ENCODE measurements at regions of chr10 and their contacts with region 1.

Region 1: GRCh38 chr10:28663576-28664313 is 13.6 kb upstream of the BAMBI start:
- DNase-seq: peak; percentile 66
- ATAC-seq: peak; percentile 98
- H3K4me3 ChIP-seq: no peak overlapping the region
- H3K27ac ChIP-seq: no peak overlapping the region
- H3K4me1 ChIP-seq: peaks cover 2 to 20% of the 10 kb centered on the region in 2 experiments; a peak in 3 of 4 replicates
- H3K27me3 ChIP-seq: no peaks in the 10 kb centered on the region
- CTCF ChIP-seq: peak; percentile 92 to 99 (median 97)
- POLR2A ChIP-seq: no peak
- RAD21 ChIP-seq: peak; percentile 97

Region 2: GRCh38 chr10:28628184-28628893 is 35.4 kb before region 1 on chr10:
- CTCF ChIA-PET with region 1: interaction called, 8 read pairs
- POLR2A ChIA-PET with region 1: no interaction called
- RAD21 ChIA-PET with region 1: no interaction called
- intact Hi-C with region 1: loop called (anchors 2 kb)
- DNase-seq: peak; percentile 63
- ATAC-seq: peak; percentile 96
- H3K4me3 ChIP-seq: no peak overlapping the region
- H3K27ac ChIP-seq: no peak overlapping the region
- H3K4me1 ChIP-seq: peaks cover 3 to 7% of the 10 kb centered on the region in 2 experiments; a peak in 2 of 4 replicates
- H3K27me3 ChIP-seq: no peaks in the 10 kb centered on the region
- CTCF ChIP-seq: peak; percentile 72 to 96 (median 93)
- POLR2A ChIP-seq: no peak
- RAD21 ChIP-seq: peak; percentile 93

Region 3: DNA sequence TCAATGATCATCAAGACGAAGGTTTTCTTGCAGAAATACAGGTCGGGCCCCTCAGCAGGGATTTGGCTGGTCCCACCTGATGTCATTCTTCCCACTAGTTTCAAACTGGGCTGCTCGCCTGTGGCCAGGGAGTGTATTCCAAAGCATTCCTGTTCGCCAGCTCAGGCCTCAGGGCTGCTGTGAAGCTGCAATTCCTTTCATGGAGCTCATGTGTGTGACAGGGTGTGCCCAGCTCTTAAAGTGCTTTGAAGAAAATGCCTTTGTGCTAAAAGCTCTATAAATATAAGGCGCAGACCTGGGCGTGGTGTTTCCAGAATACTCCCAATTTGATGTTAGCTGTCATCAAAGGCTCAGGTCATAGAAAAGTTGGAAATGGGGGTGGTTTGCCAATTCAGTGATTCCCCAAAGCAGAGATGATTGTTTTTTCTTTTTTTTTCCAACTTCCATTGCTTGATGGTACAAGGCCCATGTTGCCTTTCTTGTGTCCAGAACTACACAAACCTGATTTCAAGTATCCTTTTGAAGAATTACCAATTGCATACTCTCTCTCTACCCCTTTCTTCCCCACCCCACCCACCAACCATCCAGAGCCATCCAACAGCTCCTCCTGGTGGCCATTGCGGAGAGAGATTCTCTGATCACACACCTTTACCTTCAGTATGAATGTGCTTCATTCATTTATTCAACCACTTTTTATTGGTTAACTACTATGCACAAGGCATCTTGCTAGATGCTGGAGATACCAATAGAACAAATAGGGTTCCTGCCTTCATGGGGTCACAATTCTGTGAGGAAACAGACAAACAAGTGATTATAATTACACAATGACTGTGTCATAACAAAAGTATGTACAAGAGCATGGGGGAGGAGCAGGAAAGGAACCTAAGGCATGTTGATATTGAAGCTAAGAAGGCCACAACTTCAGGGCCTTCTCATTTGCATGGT is 327.9 kb after region 1 on chr10:
- CTCF ChIA-PET with region 1: interaction called, 87 read pairs
- POLR2A ChIA-PET with region 1: interaction called, 6 read pairs
- RAD21 ChIA-PET with region 1: interaction called, 16 to 34 read pairs
- intact Hi-C with region 1: loop called (anchors 1 kb)
- DNase-seq: peak; percentile 76
- ATAC-seq: peak; percentile 88
- H3K4me3 ChIP-seq: no peak overlapping the region
- H3K27ac ChIP-seq: peak overlapping the region; percentile 23; the same call in 1 of the 2 replicates
- H3K4me1 ChIP-seq: peaks cover 7 to 32% of the 10 kb centered on the region in 2 experiments
- H3K27me3 ChIP-seq: no peaks in the 10 kb centered on the region
- CTCF ChIP-seq: peak; percentile 88 to 94 (median 93)
- POLR2A ChIP-seq: no peak
- RAD21 ChIP-seq: peak; percentile 97

Region 4: DNA sequence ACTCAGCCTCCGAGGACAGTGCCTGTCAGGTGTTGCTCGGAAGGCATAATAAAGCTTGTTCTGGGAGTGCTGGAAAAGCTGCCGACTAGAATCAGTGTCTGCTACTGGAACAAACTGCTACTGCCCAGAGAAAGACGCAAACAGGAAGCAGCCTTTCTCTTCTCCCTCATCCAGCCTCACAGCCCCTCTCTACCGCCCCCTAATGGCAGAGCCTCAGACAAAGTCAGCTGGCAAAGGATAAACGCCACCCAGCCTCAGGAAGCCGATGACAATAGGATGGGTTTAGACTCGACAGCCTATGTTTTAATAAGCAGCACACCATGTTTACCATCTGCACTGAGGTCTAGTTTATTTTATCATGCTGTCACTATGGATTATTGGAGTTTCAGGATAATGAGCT is 455.6 kb after region 1 on chr10:
- CTCF ChIA-PET with region 1: interaction called, 12 read pairs
- POLR2A ChIA-PET with region 1: no interaction called
- RAD21 ChIA-PET with region 1: interaction called in 1 of 2 experiments, 3 read pairs
- intact Hi-C with region 1: no loop called
- DNase-seq: peak; percentile 29
- ATAC-seq: peak; percentile 87
- H3K4me3 ChIP-seq: no peak overlapping the region
- H3K27ac ChIP-seq: no peak overlapping the region
- H3K4me1 ChIP-seq: peaks cover 0 to 5% of the 10 kb centered on the region in 2 experiments; a peak in 1 of 4 replicates
- H3K27me3 ChIP-seq: no peaks in the 10 kb centered on the region
- CTCF ChIP-seq: peak; percentile 39 to 92 (median 78); a peak in 5 of 6 replicates
- POLR2A ChIP-seq: no peak
- RAD21 ChIP-seq: peak; percentile 54

Region 5: GRCh38 chr10:29127037-29127700 is 463.4 kb after region 1 on chr10:
- CTCF ChIA-PET with region 1: interaction called, 12 read pairs
- POLR2A ChIA-PET with region 1: interaction called, 4 read pairs
- RAD21 ChIA-PET with region 1: interaction called, 3 to 6 read pairs
- intact Hi-C with region 1: loop called (anchors 1 kb)
- DNase-seq: no peak
- ATAC-seq: no peak
- H3K4me3 ChIP-seq: no peak overlapping the region
- H3K27ac ChIP-seq: no peak overlapping the region
- H3K4me1 ChIP-seq: no peaks in the 10 kb centered on the region
- H3K27me3 ChIP-seq: peaks cover 10% of the 10 kb centered on the region
- CTCF ChIP-seq: no peak
- POLR2A ChIP-seq: no peak
- RAD21 ChIP-seq: no peak

Region 6: DNA sequence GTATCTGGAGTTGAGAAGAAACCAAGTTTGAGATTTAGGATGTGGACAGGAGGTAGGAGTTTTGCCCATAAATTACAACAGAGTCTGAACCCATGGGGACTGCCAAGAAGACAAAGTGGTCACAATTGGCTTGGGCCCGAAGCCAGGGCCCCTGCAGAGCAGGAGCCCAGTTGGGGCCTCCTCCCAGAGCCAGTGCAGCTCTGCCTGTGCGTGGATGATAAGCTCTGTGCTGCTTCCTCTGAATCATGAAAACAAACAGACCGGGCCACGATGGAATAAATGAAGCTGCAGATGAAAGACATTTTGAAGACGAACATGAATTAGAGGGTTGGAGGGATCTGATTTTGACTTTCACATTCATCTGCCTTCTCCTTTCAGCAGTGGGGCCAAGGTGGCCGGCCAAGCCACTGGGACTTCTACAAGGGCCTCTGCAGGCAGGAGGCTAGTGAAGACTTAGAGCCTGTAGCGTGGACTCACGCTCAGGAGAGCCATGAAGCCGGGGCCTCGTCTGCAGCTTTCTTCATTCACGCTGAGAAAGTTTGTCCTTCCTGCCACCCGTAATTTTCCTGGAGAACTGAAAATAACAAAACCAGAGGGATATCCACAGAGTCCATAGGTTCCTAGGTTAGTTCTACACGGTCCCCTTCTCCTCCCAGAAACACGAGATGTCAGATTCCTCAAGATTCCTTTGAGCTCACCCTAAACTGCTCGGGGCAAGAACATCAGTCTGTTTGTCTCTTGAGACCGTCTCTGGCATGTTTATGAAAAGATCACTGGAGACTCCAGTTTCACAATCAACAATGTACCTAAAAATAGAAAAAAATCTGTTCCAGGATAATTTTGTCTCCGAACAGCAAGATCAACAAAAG is 468.4 kb after region 1 on chr10:
- CTCF ChIA-PET with region 1: interaction called, 12 read pairs
- POLR2A ChIA-PET with region 1: interaction called, 4 read pairs
- RAD21 ChIA-PET with region 1: interaction called, 3 to 6 read pairs
- intact Hi-C with region 1: loop called (anchors 1 kb)
- DNase-seq: no peak
- ATAC-seq: no peak
- H3K4me3 ChIP-seq: no peak overlapping the region
- H3K27ac ChIP-seq: no peak overlapping the region
- H3K4me1 ChIP-seq: no peaks in the 10 kb centered on the region; a peak in 1 of 4 replicates
- H3K27me3 ChIP-seq: peaks cover 1% of the 10 kb centered on the region
- CTCF ChIP-seq: no peak
- POLR2A ChIP-seq: no peak
- RAD21 ChIP-seq: no peak

Region 7: GRCh38 chr10:29239569-29240472 is 576.1 kb after region 1 on chr10:
- CTCF ChIA-PET with region 1: interaction called, 3 read pairs
- POLR2A ChIA-PET with region 1: no interaction called
- RAD21 ChIA-PET with region 1: no interaction called
- intact Hi-C with region 1: loop called (anchors 5 kb)
- DNase-seq: peak; percentile 43
- ATAC-seq: peak; percentile 100
- H3K4me3 ChIP-seq: no peak overlapping the region
- H3K27ac ChIP-seq: no peak overlapping the region
- H3K4me1 ChIP-seq: no peaks in the 10 kb centered on the region
- H3K27me3 ChIP-seq: no peaks in the 10 kb centered on the region
- CTCF ChIP-seq: peak; percentile 62 to 91 (median 84); a peak in 5 of 6 replicates
- POLR2A ChIP-seq: no peak
- RAD21 ChIP-seq: peak; percentile 76